Transverse colon (tissue), 4 donors: ENCODE measurements at regions of chr7 and their contacts with region 1.

Region 1: GRCh38 chr7:138002096-138002827 is 376 bp upstream of the CREB3L2 start:
- DNase-seq: peak; percentile 100
- H3K4me3 ChIP-seq: peak overlapping the region; percentile 74 to 95 (median 82)
- H3K27ac ChIP-seq: peak overlapping the region; percentile 94 to 99 (median 96)
- H3K4me1 ChIP-seq: peaks cover 2 to 34% (median 15%) of the 10 kb centered on the region in 4 donors
- H3K27me3 ChIP-seq: no peaks in the 10 kb centered on the region
- CTCF ChIP-seq: peak; percentile 90 to 97 (median 93)
- EP300 ChIP-seq: no peak
- POLR2A ChIP-seq: no peak

Region 2: GRCh38 chr7:137916980-137917645 is 85.1 kb before region 1 on chr7:
- in situ Hi-C with region 1: loop called in 1 of 4 experiments (anchors 10 kb)
- intact Hi-C with region 1: loop called (anchors 5 kb)
- DNase-seq: no peak
- H3K4me3 ChIP-seq: no peak overlapping the region
- H3K27ac ChIP-seq: peak overlapping the region in 2 of 4 donors; percentile 16 to 23
- H3K4me1 ChIP-seq: peaks cover 6 to 22% (median 14%) of the 10 kb centered on the region in 4 donors
- H3K27me3 ChIP-seq: no peaks in the 10 kb centered on the region
- CTCF ChIP-seq: no peak
- EP300 ChIP-seq: no peak
- POLR2A ChIP-seq: no peak

Region 3: DNA sequence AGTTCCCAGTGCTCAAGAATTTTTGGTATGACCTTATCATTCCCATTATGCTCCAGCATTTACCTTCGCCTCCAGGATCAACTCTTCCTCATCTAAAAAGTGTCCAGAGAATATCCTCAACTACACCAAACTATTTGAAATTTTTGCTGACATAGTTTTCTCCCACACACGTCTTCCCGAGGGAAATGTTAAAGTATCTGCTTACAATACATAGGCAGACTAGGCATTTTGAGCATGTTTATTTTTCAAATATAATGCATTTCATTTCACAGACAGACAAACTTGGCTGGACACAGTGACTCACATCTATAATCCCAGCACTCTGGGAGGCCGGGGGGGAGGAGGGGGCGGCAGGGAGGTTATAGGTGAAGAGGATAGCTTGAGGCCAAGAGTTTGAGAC is 280.7 kb after region 1 on chr7:
- in situ Hi-C with region 1: no loop called
- intact Hi-C with region 1: no loop called
- DNase-seq: no peak
- H3K4me3 ChIP-seq: no peak overlapping the region
- H3K27ac ChIP-seq: no peak overlapping the region
- H3K4me1 ChIP-seq: no peaks in the 10 kb centered on the region
- H3K27me3 ChIP-seq: no peaks in the 10 kb centered on the region
- CTCF ChIP-seq: no peak
- EP300 ChIP-seq: no peak
- POLR2A ChIP-seq: no peak